ENCODE measurements at regions of chr2 and their contacts with region 1.

Region 1: DNA sequence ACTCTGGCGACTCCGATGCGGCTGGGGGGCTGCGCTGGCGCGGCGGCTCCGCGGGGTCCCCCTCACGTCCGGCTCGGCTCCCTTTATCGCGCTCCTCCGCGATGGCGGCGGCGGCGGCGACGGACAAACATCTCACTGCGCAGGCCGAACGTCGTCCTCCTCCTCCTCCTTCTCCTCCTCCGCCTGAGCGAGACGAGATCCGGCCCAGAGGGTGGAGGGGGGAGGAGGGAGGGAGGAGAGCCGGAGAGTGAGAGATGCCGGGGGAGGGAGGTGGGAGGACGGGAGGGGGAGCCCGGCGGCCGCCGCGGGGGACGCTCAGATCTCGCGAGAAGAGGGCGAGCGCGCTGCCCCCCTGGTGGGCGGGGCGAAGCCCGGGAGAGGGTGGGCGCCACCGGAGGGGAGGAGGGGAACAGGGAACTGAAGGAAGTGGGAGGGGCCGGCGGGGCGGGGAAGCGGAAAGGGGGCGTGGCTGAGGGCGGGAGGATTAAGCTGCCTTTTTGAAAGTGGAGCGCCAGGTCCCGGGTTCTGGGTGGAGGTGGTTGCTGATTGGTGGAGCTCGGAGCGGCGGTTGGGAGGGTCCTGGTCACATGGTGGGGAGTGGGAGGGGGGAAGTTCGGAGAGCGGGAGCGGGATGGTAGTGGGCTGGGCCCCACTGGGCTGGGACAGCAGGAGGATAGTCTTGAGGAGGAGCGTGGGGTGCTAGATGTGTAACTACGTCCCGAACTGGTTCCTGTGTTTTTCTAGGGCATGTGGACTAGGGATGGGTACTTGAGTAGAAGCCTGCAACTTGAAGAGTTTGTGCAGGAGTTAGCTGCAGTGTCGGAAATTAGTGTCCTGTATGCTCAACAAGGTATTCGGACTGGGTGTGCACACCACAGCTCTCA is at the start of gene CUL3:
- DNase-seq: peak; percentile 97 to 100
- H3K4me3 ChIP-seq: peak within 1 kb of the TSS; percentile 67
- H3K27ac ChIP-seq: peak within 1 kb of the TSS; percentile 46
- H3K4me1 ChIP-seq: peaks cover 39% of the 10 kb centered on the region
- H3K27me3 ChIP-seq: no peaks in the 10 kb centered on the region
- CTCF ChIP-seq: no peak
- total RNA-seq, gene CUL3: 155 and 200 TPM in 2 replicates

Region 2: DNA sequence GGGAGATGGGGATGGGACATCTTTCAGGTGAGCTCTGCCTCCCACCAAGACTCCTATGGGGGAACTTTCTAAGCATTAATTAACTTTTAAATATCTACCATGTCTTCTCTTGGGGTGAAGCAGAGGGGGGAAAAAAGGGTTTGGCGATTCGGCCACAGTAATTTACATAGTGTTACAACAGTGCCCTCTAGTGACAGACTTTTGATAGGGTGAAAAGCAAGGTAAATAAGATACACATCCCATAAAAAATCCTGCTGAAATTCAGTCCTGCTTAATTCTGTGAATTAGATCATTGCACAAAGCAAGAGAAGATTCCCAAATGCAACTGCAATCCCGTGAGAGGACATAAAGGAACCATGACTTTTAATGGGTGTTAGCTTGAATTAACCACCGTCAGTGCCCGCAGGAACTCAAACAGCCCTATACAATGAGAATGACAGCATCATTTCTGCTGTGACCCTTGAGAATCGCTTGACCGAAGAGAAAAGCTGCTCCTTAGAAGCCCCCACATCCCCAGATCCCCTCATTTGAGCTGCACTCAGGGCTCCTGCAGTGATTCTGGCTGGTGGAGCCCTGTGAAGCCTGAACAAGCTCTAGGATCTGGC is 216.3 kb before region 1 on chr2:
- CTCF ChIA-PET with region 1: no interaction called
- POLR2A ChIA-PET with region 1: no interaction called
- intact Hi-C with region 1: loop called (anchors 5 kb)
- DNase-seq: peak; percentile 40 to 50
- H3K4me3 ChIP-seq: no peak overlapping the region
- H3K27ac ChIP-seq: no peak overlapping the region
- H3K4me1 ChIP-seq: no peaks in the 10 kb centered on the region
- H3K27me3 ChIP-seq: no peaks in the 10 kb centered on the region
- CTCF ChIP-seq: peak; percentile 97

Region 3: DNA sequence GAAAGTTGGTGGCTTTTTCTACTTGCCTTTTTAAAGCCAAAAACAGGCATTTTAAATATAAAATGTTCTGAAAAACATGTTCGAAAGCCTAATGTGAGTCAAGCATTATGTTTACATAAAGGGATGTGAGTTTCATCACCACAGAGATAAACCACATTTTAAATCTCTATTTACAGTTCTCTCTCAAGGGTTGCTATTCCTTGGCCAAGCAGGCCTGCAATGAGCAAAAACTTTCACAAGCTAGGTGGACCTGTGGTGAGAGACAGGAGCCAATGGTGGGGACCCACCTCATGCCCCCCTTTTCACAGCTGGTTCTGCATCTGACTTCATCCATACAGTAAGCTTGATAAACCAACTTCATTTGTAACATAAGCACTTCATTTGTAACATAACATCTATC is 65.4 kb before region 1 on chr2:
- CTCF ChIA-PET with region 1: no interaction called
- POLR2A ChIA-PET with region 1: no interaction called
- intact Hi-C with region 1: no loop called
- DNase-seq: no peak
- H3K4me3 ChIP-seq: no peak overlapping the region
- H3K27ac ChIP-seq: peak overlapping the region; percentile 4
- H3K4me1 ChIP-seq: peaks cover 30% of the 10 kb centered on the region
- H3K27me3 ChIP-seq: no peaks in the 10 kb centered on the region
- CTCF ChIP-seq: no peak

Region 4: GRCh38 chr2:224574423-224575084 is 10.9 kb before region 1 on chr2:
- CTCF ChIA-PET with region 1: no interaction called
- POLR2A ChIA-PET with region 1: interaction called, 4 read pairs
- intact Hi-C with region 1: loop called (anchors 1 kb)
- DNase-seq: no peak
- H3K4me3 ChIP-seq: no peak overlapping the region
- H3K27ac ChIP-seq: peak overlapping the region; percentile 5; the same call in 1 of the 2 replicates
- H3K4me1 ChIP-seq: peaks cover 50% of the 10 kb centered on the region
- H3K27me3 ChIP-seq: no peaks in the 10 kb centered on the region
- CTCF ChIP-seq: no peak

Region 5: GRCh38 chr2:224678634-224679263 is 93.3 kb after region 1 on chr2:
- CTCF ChIA-PET with region 1: no interaction called
- POLR2A ChIA-PET with region 1: interaction called, 4 read pairs
- intact Hi-C with region 1: loop called (anchors 1 kb)
- DNase-seq: peak; percentile 52 to 90
- H3K4me3 ChIP-seq: peak overlapping the region; percentile 33; the same call in 1 of the 2 replicates
- H3K27ac ChIP-seq: peak overlapping the region; percentile 92
- H3K4me1 ChIP-seq: peaks cover 26% of the 10 kb centered on the region
- H3K27me3 ChIP-seq: no peaks in the 10 kb centered on the region
- CTCF ChIP-seq: no peak